ENCODE measurements at regions of chr17 and their contacts with region 1.

Region 1: GRCh38 chr17:35666967-35667532 is 64.4 kb upstream of the RASL10B start:
- DNase-seq: no peak
- ATAC-seq: no peak

Region 2: DNA sequence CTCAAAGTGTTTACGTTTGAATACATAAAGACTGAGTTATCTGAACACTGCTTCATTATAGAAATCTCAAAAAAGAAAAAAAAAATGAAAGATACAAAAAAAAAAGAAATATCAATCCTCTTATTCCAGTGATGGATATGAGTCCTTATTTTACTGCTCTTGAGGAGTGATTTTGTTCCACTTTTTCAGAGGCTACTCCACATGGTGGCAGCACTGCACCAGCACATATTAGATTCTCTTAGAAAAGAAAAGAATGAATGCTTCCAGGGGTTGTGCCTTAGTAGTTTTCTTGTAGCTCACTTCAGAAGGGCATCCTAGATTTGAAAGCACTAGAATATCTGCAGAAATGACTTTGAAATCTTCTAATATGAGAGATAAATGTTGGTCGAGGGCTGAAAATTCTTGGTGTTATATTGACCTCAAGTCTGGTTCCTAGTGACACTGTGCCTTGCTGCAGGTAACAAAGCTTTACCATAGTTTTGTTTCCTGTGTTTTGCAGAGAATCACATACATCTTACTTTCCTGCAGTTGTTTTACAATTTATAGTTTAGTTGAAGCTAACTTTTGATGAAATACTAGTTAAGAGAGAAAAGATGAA is 54.0 kb before region 1 on chr17:
- intact Hi-C with region 1: loop called (anchors 10 kb)
- DNase-seq: peak; percentile 37
- ATAC-seq: no peak

Region 3: DNA sequence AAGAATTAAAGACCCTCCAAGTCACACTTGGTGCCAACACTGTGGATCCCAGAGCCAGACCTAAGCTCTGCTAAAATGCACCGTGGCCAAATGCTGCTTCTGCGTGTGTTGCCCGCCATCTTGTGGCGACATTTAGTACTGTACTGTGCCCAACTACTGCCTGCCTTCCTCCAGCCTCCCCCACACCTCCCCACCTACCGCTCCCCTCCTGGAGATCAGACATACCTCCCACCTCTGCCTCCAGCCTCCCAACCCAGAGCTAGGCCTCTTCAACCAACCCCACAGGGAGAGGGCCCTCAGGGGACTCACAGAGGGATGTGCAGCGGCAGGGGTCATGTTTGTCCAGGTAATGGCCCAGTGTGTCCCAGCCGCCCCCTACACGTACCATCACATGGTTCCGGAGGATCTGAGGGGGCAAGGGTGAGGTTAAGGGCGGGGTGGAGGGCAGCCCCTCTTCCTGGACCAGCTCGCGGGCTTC is 80.5 kb after region 1 on chr17:
- intact Hi-C with region 1: loop called (anchors 10 kb)
- DNase-seq: peak; percentile 79
- ATAC-seq: peak; percentile 88

Region 4: DNA sequence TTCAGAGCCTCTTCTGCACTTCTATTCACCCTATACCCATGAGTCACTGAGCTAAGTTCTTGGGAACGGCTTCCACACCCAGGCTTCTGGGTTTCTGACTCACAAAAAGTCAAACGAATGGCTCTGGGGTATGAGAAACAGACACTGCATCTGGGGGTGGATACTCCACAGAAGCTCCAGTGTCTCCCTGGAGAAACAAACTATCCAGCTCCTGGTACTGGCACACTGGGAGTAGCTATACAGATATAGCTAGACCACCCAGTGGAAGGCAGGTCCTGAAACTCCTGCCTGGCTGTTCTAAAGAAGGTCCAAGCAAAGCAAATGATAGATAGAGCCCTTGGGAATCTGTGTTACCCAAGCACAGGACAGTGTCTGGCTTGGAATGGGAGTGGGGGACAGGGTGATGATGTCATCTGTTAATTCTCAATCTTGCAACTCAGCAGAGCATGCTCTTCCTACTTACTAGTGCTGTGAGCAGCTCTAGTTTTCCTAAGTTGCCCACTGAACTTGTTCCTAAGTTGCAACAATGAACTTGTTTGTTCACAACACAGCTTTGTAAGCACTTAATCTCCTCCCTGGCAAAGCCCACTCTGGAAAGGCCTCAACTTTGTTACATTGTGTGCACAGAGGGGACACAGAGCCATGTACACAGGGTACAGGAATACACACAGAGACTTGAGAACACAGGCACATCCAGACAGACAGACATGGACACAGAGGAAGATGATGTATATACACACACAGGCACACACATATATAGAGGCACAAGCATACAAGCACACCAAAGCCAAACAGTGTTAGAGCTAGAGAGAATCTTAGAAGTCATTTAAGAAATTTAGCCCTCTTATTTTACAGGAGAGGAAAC is 121.7 kb after region 1 on chr17:
- intact Hi-C with region 1: no loop called
- DNase-seq: no peak
- ATAC-seq: peak; percentile 57